ENCODE measurements at regions of chr15 and their contacts with region 1.

Region 1: DNA sequence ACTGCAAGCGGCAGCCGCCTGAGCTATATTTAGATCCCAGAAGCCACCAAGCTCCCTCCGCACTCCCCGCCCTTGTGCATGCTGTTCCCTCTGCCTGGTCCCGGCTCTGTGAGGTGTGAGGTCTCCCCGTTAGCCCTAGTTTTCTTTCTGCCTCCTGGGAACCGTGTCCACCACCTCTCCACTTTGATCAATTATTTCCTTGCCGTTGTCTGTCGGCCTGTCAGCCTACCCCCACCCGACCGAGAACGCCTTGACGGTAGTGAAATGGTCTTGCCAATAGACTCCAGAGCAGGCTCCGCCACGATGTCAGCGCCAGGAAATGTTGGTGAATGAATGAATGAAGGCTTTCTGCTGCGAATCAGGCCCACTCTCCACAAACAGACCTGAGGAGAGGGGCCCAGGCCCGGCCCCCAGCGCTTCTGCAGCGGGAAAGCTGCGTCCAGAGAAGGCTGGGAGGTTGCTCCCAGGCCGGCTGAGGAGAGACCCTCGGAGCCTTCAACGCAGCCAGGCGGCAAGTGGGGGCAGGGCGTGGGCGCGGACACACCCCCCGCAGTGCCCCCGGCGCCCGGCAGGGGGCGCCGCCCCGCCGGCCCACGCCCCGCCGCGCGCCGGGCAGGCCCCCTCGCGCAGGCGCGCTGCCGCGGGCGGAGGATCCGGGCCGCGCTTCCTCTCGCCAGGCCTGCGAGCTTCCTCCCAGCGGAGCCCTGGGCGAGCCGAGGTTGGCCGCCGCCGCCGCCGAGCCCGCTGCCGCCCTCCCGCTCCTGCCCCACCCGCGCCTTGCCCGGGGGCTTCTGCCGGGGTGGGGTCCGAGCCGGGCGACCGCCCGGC is at the start of gene CSK:
- DNase-seq: no peak
- H3K4me3 ChIP-seq: peak within 1 kb of the TSS; percentile 89
- H3K27me3 ChIP-seq: no peaks in the 10 kb centered on the region
- CTCF ChIP-seq: peak; percentile 48
- polyA plus RNA-seq, gene CSK: 15.1 and 25.3 TPM in 2 replicates

Region 2: GRCh38 chr15:74620636-74621545 is 160.8 kb before region 1 on chr15:
- CTCF ChIA-PET with region 1: interaction called, 563 read pairs
- POLR2A ChIA-PET with region 1: no interaction called
- DNase-seq: no peak
- H3K4me3 ChIP-seq: no peak overlapping the region
- H3K27me3 ChIP-seq: no peaks in the 10 kb centered on the region
- CTCF ChIP-seq: peak; percentile 97

Region 3: GRCh38 chr15:74799856-74800547 is 18.4 kb after region 1 on chr15:
- CTCF ChIA-PET with region 1: interaction called, 62 read pairs
- POLR2A ChIA-PET with region 1: no interaction called
- DNase-seq: no peak
- H3K4me3 ChIP-seq: no peak overlapping the region
- H3K27me3 ChIP-seq: no peaks in the 10 kb centered on the region
- CTCF ChIP-seq: peak; percentile 99

Measured in BJ (cell line).